Common myeloid progenitor, CD34-positive (primary cell): ENCODE measurements at regions of chr10 and their contacts with region 1.

Region 1: DNA sequence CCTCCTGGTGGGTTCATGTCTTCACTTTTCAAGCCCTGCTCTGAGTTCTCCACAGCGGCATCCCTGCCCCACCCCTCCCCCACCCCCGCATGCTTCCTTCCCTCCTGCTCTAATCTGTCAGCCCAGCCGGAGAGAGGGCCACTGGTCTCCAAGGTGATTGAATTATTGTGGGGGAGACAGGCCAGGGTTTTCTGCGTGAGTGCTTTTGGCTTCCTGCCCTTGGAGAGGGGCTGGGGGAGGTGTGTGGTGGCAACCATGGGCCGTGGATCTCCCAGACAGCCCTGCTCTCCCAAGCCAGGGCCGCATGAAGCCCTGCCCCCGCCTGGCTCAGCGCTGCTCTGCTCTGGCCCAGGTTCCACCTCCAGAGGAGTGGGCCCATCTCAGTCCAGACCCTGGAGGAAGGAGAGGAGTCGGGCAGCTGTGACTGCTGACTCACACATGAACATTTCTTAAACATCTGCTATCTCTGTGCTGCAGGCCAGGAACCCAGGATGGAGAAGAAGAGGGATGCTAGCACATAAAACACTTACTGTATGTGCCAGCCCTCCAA is 109.9 kb downstream of the ZMIZ1 start:
- DNase-seq: peak; percentile 95 to 99 (median 99)
- H3K4me3 ChIP-seq: peak overlapping the region in 3 of 7 experiments; percentile 16 to 61 (median 47)
- H3K27ac ChIP-seq: peak overlapping the region; percentile 73 to 91
- H3K4me1 ChIP-seq: peaks cover 4 to 100% (median 98%) of the 10 kb centered on the region in 4 experiments
- H3K27me3 ChIP-seq: no peaks in the 10 kb centered on the region

Region 2: DNA sequence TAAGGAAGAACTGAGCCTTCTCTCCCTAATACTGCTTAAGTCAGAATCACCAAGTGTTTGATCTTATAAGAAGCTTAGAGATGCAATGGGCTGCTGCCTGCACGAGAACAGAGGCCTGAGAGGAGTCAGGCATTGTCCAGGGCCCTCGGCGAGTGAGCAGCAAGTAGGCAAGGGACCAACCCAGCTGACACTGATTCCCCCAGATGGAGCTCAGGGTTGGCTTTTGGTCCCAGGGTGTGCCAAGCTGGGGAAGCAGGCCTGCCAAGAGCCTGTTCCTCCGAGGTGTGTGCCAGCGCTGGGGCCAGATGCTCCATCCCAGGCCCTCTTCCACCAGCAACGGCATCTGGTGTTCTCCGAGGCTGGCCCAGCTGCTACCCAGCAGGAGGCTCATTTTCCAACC is 331.9 kb before region 1 on chr10:
- CTCF ChIA-PET with region 1: no interaction called
- POLR2A ChIA-PET with region 1: no interaction called
- DNase-seq: no peak
- H3K4me3 ChIP-seq: no peak overlapping the region
- H3K27ac ChIP-seq: no peak overlapping the region
- H3K4me1 ChIP-seq: no peaks in the 10 kb centered on the region
- H3K27me3 ChIP-seq: no peaks in the 10 kb centered on the region

Region 3: DNA sequence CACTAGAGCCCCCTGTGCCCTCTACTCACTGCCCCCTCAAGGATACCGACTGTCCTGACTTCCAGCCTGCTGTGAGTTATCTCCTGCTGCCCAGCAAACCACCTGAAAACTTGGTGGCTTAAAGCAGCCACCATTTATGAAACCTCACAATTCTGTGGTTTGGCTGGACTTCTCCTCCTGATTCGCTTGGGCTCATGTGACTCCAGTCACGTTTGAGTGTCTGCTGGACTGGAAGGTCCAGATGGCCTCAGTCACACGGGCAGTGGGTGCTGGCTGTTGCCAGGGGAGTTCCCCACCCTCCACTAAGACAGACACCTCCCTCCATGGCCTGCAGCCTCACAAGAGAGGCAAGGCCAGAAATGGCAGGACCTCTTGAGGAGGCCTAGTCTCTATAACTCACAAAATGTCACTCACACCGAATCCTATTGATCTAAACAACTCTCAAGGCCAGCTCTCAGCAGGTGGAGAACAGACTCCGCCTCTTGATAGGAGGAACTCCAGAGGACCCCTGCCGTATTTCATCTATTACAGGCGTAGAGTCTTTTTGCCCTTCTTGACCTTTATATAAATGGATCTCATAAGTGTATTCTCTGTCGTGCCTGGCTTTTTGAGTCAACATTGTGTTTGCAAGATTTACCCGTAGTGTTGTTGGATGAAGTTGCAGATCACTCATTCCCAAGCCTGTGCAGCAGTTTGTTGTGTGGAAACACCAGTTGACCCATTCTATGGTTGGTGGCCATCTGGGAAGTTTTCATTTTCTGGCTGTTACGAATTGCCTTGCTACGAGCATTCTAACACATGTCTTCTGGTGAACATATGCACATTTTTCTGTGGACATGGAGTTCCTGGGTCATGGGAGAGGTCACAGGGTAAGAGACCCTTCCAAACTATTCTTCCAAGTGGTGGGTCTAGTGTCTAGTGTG is 61.6 kb before region 1 on chr10:
- CTCF ChIA-PET with region 1: no interaction called
- POLR2A ChIA-PET with region 1: no interaction called
- DNase-seq: no peak
- H3K4me3 ChIP-seq: no peak overlapping the region
- H3K27ac ChIP-seq: peak overlapping the region; percentile 1 to 49
- H3K4me1 ChIP-seq: peaks cover 0 to 62% (median 52%) of the 10 kb centered on the region in 4 experiments
- H3K27me3 ChIP-seq: no peaks in the 10 kb centered on the region

Region 4: GRCh38 chr10:79149662-79150443 is 28.8 kb before region 1 on chr10:
- CTCF ChIA-PET with region 1: interaction called, 517 read pairs
- POLR2A ChIA-PET with region 1: interaction called, 4 read pairs
- DNase-seq: peak in 1 of 3 donors; percentile 42
- H3K4me3 ChIP-seq: peak overlapping the region in 1 of 7 experiments; percentile 6
- H3K27ac ChIP-seq: peak overlapping the region; percentile 64 to 80
- H3K4me1 ChIP-seq: peaks cover 10 to 91% (median 78%) of the 10 kb centered on the region in 4 experiments
- H3K27me3 ChIP-seq: no peaks in the 10 kb centered on the region

Region 5: GRCh38 chr10:79374312-79375191 is 195.9 kb after region 1 on chr10:
- CTCF ChIA-PET with region 1: no interaction called
- POLR2A ChIA-PET with region 1: no interaction called
- DNase-seq: peak; percentile 55 to 78 (median 68)
- H3K4me3 ChIP-seq: no peak overlapping the region
- H3K27ac ChIP-seq: no peak overlapping the region
- H3K4me1 ChIP-seq: peaks cover 0 to 12% (median 4%) of the 10 kb centered on the region in 4 experiments
- H3K27me3 ChIP-seq: no peaks in the 10 kb centered on the region